ENCODE measurements at regions of chr11 and their contacts with region 1.

Region 1: DNA sequence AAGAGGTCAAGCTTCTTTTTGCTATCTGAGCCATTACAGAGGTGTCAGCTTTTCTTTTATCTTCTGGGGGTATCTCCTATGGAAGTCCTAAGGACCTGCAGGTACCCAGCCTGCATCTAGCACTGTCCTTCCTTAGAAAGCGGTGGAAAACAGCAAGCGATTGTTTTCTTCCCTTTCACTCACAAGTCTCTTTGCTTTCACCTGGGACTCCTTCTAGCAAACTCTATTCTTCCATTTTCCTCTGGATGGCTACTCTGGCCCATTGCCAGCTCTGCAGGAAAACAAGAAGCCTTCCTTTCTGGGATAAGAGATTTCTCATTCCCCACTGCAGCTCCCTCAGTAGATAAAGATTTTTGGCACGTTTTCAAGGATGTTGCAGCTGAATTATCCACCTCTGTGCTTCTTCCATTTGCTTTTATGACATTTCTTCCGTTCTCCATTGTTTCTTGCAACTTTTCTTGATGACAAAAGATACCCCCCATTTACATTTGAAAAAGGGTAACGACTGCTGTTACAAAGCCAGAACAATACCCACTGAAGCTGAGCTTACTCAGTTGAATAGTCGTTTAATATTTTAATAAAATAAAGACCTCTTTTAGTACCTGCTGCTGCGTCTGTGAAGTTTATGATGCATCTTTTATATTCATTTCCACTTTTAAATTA is 40.2 kb upstream of the BDNF start:
- DNase-seq: no peak
- ATAC-seq: no peak

Region 2: DNA sequence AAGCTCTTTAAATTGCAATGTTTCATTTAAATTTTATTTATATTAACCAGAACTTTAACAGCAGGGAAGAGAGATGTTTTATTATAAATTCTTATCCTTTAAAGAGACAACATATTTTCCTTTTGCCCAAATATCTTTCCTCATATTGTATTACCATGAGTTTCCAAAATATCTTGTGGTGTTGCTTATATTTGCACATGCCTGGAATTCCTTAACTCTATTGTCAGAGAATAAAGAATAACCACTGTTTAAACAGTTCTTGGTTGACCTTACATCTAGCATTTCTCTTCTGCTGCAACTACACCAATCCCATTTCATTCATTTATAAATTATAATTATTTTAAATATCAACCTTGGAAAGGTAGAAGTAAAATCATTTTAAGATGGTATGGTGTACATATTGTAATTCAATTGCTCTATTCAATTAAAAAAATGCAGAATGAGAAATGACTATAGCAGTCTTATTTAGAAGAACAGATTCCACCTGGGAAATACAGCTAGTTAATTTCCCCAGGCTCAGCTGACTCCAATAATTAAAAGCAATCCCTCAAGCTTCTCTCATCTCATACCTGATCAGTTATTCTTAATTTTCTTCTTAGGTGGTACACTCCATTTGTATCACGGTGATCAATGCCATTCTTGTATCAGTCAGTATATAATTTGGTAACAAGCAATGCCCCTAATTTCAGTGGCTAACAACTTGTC is 1353.1 kb after region 1 on chr11:
- intact Hi-C with region 1: loop called (anchors 10 kb)
- DNase-seq: no peak
- ATAC-seq: no peak